ENCODE measurements at regions of chr9 and their contacts with region 1.

Region 1: GRCh38 chr9:125407974-125408900 is 146.6 kb downstream of the GAPVD1 start:
- DNase-seq: peak; percentile 77 to 96 (median 82)
- ATAC-seq: peak; percentile 96
- H3K4me3 ChIP-seq: peak overlapping the region; percentile 52 to 59
- H3K27ac ChIP-seq: peak overlapping the region; percentile 19 to 53
- H3K4me1 ChIP-seq: peaks cover 0 to 19% of the 10 kb centered on the region in 2 donors
- H3K27me3 ChIP-seq: peaks cover 0 to 26% of the 10 kb centered on the region in 2 donors
- CTCF ChIP-seq: peak; percentile 88 to 92

Region 2: DNA sequence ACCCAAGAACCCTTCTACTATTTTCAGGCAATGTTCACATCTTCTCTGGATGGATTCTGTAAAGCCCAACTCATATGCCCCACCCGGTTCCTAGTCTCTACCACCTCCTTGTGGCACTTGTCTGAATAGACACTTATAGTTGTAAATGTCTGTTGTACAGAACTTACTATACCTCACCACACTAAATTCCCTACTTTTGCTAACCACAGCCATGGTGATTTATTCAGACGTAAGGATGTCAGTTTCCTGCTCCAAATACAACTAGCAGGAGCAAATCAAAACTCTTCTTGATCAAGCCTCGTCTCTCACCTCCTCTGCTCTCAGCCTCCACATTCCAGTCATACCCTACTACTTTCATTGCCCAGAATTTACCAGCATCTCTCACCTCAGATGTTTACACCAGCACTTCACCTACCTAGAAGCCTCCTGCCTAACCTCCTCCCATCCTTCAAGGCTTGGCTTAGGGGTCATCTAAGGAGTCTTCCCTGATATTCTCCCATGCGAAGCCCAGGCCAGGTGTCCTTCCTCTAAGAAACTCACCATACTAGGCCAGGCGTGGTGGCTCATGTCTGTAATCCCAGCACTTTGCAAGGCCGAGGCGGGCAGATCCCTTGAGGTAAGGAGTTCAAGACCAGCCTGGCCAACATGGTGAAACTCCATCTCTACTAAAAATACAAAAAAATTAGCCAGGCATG is 223.3 kb after region 1 on chr9:
- intact Hi-C with region 1: loop called in 1 of 2 experiments (anchors 10 kb)
- DNase-seq: peak in 1 of 4 donors; percentile 40
- ATAC-seq: peak; percentile 84
- H3K4me3 ChIP-seq: no peak overlapping the region
- H3K27ac ChIP-seq: peak overlapping the region in 1 of 2 donors; percentile 84
- H3K4me1 ChIP-seq: peaks cover 15 to 63% of the 10 kb centered on the region in 2 donors
- H3K27me3 ChIP-seq: no peaks in the 10 kb centered on the region
- CTCF ChIP-seq: peak; percentile 27 to 35

Region 3: GRCh38 chr9:126228781-126229444 is 820.7 kb after region 1 on chr9:
- intact Hi-C with region 1: loop called (anchors 5 to 10 kb)
- DNase-seq: peak; percentile 54 to 89 (median 72)
- ATAC-seq: peak; percentile 99
- H3K4me3 ChIP-seq: no peak overlapping the region
- H3K27ac ChIP-seq: no peak overlapping the region
- H3K4me1 ChIP-seq: no peaks in the 10 kb centered on the region
- H3K27me3 ChIP-seq: peaks cover 0 to 47% of the 10 kb centered on the region in 2 donors
- CTCF ChIP-seq: peak; percentile 91 to 92

Measured in left lung (tissue), 14 donors.